CD8-positive, alpha-beta T cell (primary cell): ENCODE measurements at regions of chr17 and their contacts with region 1.

Region 1: DNA sequence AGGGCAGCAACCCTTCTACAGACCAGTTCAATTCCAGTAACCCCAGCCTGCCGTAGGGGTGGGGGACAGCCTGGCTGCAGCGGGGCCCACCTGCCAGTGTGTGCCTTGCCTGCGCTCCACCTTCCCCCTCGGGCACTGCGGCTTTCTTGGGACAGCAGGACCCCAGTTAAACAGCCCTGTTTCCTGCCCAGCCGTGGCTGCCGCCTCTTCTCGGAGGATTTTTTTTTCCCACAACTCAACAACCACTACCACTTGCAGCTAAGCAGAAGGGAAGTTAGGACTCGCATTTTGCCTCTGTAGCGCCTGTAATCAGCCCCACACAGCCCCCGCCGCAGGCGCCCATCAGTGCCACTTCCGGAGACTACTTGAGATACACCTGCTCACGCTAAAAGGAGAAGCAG is 76.1 kb downstream of the RAI1 start:
- DNase-seq: peak in 7 of 9 experiments; percentile 25 to 72 (median 48)
- ATAC-seq: peak; percentile 61
- H3K4me3 ChIP-seq: peak overlapping the region in 1 of 2 experiments; percentile 44
- H3K4me3 Mint-ChIP-seq: peak overlapping the region; percentile 77
- H3K27ac ChIP-seq: peak overlapping the region; percentile 54 to 66
- H3K27ac Mint-ChIP-seq: peak overlapping the region; percentile 94
- H3K4me1 ChIP-seq: peaks cover 66% of the 10 kb centered on the region
- H3K4me1 Mint-ChIP-seq: peaks cover 72% of the 10 kb centered on the region
- H3K27me3 ChIP-seq: no peaks in the 10 kb centered on the region
- H3K27me3 Mint-ChIP-seq: no peaks in the 10 kb centered on the region
- CTCF ChIP-seq: no peak

Region 2: DNA sequence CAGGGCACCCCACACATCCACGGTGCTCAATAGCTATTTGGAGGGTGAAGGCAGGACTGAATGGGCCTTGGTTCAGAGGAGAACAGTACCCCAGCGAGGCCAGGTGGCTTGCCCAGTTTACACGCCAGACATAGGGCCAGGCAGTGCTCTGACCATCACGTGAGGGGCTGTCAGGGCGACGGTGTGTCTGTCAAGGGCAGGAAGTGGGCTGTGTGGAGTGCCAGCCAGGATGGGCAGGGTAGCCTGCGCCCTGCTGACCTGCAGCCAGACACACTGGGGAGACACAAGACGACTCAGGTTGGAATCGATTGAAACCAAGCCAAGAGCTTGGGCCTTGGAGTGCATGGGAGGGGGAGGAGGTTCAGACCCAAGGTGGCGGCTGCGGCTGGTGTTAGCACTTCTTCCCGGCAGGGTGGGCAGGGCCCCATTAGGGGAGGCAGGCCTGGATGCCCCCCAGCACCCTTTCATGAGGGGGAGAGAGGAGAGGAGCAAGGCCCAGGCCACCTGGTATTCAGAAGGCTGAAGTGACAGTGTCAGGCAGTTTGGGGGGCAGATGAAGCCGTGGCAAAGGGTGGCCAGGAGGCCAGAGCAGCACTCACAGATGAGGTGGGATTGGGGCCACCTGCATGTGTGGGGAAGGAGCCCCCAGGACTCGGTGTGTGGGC is 11.2 kb after region 1 on chr17:
- CTCF ChIA-PET with region 1: no interaction called
- POLR2A ChIA-PET with region 1: no interaction called
- intact Hi-C with region 1: no loop called
- DNase-seq: no peak
- ATAC-seq: no peak
- H3K4me3 ChIP-seq: no peak overlapping the region
- H3K4me3 Mint-ChIP-seq: no peak overlapping the region
- H3K27ac ChIP-seq: no peak overlapping the region
- H3K27ac Mint-ChIP-seq: no peak overlapping the region
- H3K4me1 ChIP-seq: peaks cover 27% of the 10 kb centered on the region
- H3K4me1 Mint-ChIP-seq: peaks cover 32% of the 10 kb centered on the region
- H3K27me3 ChIP-seq: no peaks in the 10 kb centered on the region
- H3K27me3 Mint-ChIP-seq: no peaks in the 10 kb centered on the region
- CTCF ChIP-seq: no peak

Region 3: GRCh38 chr17:17783116-17783824 is 25.9 kb after region 1 on chr17:
- CTCF ChIA-PET with region 1: interaction called, 10 read pairs
- POLR2A ChIA-PET with region 1: interaction called, 3 read pairs
- intact Hi-C with region 1: loop called (anchors 1 to 2 kb)
- DNase-seq: peak; percentile 24 to 79 (median 65)
- ATAC-seq: peak; percentile 58
- H3K4me3 ChIP-seq: peak overlapping the region; percentile 50 to 54
- H3K4me3 Mint-ChIP-seq: peak overlapping the region; percentile 85
- H3K27ac ChIP-seq: peak overlapping the region in 1 of 2 experiments; percentile 36
- H3K27ac Mint-ChIP-seq: peak overlapping the region; percentile 41
- H3K4me1 ChIP-seq: peaks cover 30% of the 10 kb centered on the region
- H3K4me1 Mint-ChIP-seq: peaks cover 30% of the 10 kb centered on the region
- H3K27me3 ChIP-seq: peaks cover 0 to 4% of the 10 kb centered on the region in 2 experiments
- H3K27me3 Mint-ChIP-seq: no peaks in the 10 kb centered on the region
- CTCF ChIP-seq: peak; percentile 26